PC-9 (cell line): ENCODE measurements at regions of chr7 and their contacts with region 1.

Region 1: GRCh38 chr7:22402250-22402649 is 45.3 kb upstream of the RAPGEF5 start:
- DNase-seq: no peak
- H3K4me3 ChIP-seq: no peak overlapping the region
- H3K27ac ChIP-seq: no peak overlapping the region
- H3K4me1 ChIP-seq: no peaks in the 10 kb centered on the region; the same call in 1 of the 2 replicates
- H3K27me3 ChIP-seq: no peaks in the 10 kb centered on the region
- CTCF ChIP-seq: no peak

Region 2: GRCh38 chr7:22386865-22387264 is 15.4 kb before region 1 on chr7:
- CTCF ChIA-PET with region 1: no interaction called
- POLR2A ChIA-PET with region 1: interaction called, 10 read pairs
- intact Hi-C with region 1: no loop called
- DNase-seq: no peak
- H3K4me3 ChIP-seq: no peak overlapping the region
- H3K27ac ChIP-seq: no peak overlapping the region
- H3K4me1 ChIP-seq: no peaks in the 10 kb centered on the region
- H3K27me3 ChIP-seq: no peaks in the 10 kb centered on the region
- CTCF ChIP-seq: no peak